ENCODE measurements at regions of chr2 and their contacts with region 1.

Region 1: GRCh38 chr2:227010433-227010832 is 153.6 kb downstream of the COL4A4 start:
- DNase-seq: no peak
- H3K4me3 ChIP-seq: no peak overlapping the region
- H3K27ac ChIP-seq: no peak overlapping the region
- H3K4me1 ChIP-seq: no peaks in the 10 kb centered on the region
- H3K27me3 ChIP-seq: no peaks in the 10 kb centered on the region
- CTCF ChIP-seq: no peak
- EP300 ChIP-seq: no peak
- POLR2A ChIP-seq: no peak

Region 2: GRCh38 chr2:225282858-225283710 is 1727.3 kb before region 1 on chr2:
- in situ Hi-C with region 1: loop called in 1 of 4 experiments (anchors 25 kb)
- intact Hi-C with region 1: no loop called
- DNase-seq: no peak
- H3K4me3 ChIP-seq: no peak overlapping the region
- H3K27ac ChIP-seq: no peak overlapping the region
- H3K4me1 ChIP-seq: no peaks in the 10 kb centered on the region
- H3K27me3 ChIP-seq: no peaks in the 10 kb centered on the region
- CTCF ChIP-seq: peak; percentile 38 to 64 (median 51)
- EP300 ChIP-seq: no peak
- POLR2A ChIP-seq: no peak

Measured in transverse colon (tissue), 4 donors.